ENCODE measurements at regions of chr17 and their contacts with region 1.

Region 1: GRCh38 chr17:72725433-72726068 is 366.9 kb downstream of the SLC39A11 start:
- DNase-seq: peak; percentile 66
- ATAC-seq: peak; percentile 84
- H3K4me3 ChIP-seq: no peak overlapping the region
- H3K27ac ChIP-seq: no peak overlapping the region
- H3K4me1 ChIP-seq: peaks cover 8% of the 10 kb centered on the region
- H3K27me3 ChIP-seq: no peaks in the 10 kb centered on the region
- CTCF ChIP-seq: peak; percentile 90
- POLR2A ChIP-seq: peak; percentile 42; the same call in 1 of the 2 replicates
- RAD21 ChIP-seq: peak; percentile 95

Region 2: DNA sequence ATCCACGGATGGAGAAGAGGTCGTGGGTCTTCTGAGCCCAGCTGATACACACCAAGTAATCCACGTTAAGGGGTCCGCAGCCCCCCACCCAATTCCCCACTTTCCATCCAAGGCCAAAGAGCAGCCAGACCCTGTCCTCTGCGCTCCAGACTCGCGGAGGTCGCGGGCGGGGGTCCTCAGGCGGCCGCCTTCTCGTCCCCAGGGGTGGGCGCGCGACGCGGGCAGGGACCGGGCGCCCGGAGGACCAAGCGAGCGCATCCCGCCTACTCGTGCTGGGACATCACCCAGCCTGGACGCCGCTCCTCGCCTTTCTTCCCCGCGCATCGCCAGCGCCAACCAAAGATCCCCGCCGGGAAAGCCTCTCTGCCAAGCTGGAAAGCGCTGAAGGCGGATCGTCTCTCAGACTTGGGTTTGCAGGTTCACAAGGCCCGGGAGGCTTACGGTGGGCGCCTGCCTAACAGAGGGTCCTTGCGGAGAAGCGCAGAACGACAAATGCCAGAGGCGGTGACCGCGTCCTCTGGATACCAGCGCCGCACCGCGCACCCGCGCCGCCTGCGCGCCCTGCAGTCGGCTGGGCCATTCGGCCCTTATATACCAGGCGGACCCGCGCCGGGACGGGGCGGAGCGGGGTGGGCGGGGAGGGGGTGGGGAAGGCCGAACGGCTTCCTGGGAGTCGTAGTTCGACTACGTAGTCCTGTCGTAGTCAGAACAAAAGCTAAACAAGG is 133.1 kb before region 1 on chr17:
- CTCF ChIA-PET with region 1: interaction called, 5 read pairs
- POLR2A ChIA-PET with region 1: no interaction called
- dilution Hi-C with region 1: no loop called
- in situ Hi-C with region 1: no loop called
- intact Hi-C with region 1: loop called (anchors 10 kb)
- DNase-seq: peak; percentile 84
- ATAC-seq: peak; percentile 89
- H3K4me3 ChIP-seq: peak overlapping the region; percentile 99
- H3K27ac ChIP-seq: peak overlapping the region; percentile 91
- H3K4me1 ChIP-seq: peaks cover 22% of the 10 kb centered on the region
- H3K27me3 ChIP-seq: no peaks in the 10 kb centered on the region
- CTCF ChIP-seq: no peak
- POLR2A ChIP-seq: peak; percentile 100
- RAD21 ChIP-seq: no peak; the same call in 1 of the 2 replicates

Region 3: GRCh38 chr17:73092523-73093135 is 367.1 kb after region 1 on chr17 and contains the start of gene SLC39A11:
- CTCF ChIA-PET with region 1: no interaction called
- POLR2A ChIA-PET with region 1: no interaction called
- dilution Hi-C with region 1: no loop called
- in situ Hi-C with region 1: no loop called
- intact Hi-C with region 1: loop called (anchors 5 kb)
- DNase-seq: peak; percentile 91
- ATAC-seq: peak; percentile 98
- H3K4me3 ChIP-seq: peak within 1 kb of the TSS; percentile 77
- H3K27ac ChIP-seq: peak within 1 kb of the TSS; percentile 63
- H3K4me1 ChIP-seq: peaks cover 3% of the 10 kb centered on the region
- H3K27me3 ChIP-seq: 0 out of 2 replicates have a peak, but pooled peaks cover 2% of the 10 kb centered on the region
- CTCF ChIP-seq: no peak
- POLR2A ChIP-seq: peak; percentile 56
- RAD21 ChIP-seq: no peak
- total RNA-seq, gene SLC39A11: 12.5 and 14.3 TPM in 2 replicates

Region 4: DNA sequence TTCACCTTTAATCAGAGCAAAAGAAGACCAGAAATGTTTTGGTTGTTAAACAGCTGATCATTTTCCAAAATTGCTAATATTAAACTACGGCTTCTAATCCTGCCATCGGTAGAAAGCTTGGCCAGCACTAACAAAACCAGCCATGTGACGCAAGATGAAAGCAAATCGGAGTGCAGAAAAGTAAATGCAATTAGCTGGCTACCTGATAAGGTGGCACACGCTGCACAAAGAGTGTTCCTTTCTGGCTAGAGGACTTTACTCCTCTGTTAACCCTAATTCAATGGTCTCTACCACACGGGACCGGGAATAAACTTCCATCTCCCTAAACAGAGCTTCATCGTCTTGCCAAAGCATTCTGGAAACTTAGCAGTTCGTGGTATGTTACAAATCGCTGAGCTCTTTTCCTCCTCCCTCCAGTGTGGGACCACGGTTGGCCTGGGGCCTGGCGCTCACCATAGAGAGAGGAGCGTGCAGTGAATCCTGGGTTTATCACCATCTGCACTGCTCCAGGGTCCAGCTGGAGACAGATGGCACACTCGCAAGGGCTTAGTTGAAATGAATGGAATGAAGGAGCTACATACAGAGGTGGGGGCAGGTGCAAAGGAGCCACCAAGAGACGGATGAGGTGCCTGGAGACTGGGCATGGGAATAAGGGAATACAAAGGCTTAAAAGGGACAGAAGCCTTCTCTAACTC is 457.2 kb after region 1 on chr17:
- CTCF ChIA-PET with region 1: interaction called, 10 read pairs
- POLR2A ChIA-PET with region 1: no interaction called
- dilution Hi-C with region 1: no loop called
- in situ Hi-C with region 1: loop called (anchors 5 kb)
- intact Hi-C with region 1: no loop called
- DNase-seq: no peak
- ATAC-seq: no peak
- H3K4me3 ChIP-seq: no peak overlapping the region
- H3K27ac ChIP-seq: no peak overlapping the region
- H3K4me1 ChIP-seq: peaks cover 2% of the 10 kb centered on the region; the same call in 1 of the 2 replicates
- H3K27me3 ChIP-seq: no peaks in the 10 kb centered on the region
- CTCF ChIP-seq: no peak
- POLR2A ChIP-seq: no peak
- RAD21 ChIP-seq: no peak

Region 5: GRCh38 chr17:73231841-73232586 is 506.5 kb after region 1 on chr17:
- CTCF ChIA-PET with region 1: interaction called, 3 read pairs
- POLR2A ChIA-PET with region 1: no interaction called
- dilution Hi-C with region 1: no loop called
- in situ Hi-C with region 1: no loop called
- intact Hi-C with region 1: loop called (anchors 5 kb)
- DNase-seq: peak; percentile 92
- ATAC-seq: peak; percentile 92
- H3K4me3 ChIP-seq: peak overlapping the region; percentile 82
- H3K27ac ChIP-seq: peak overlapping the region; percentile 77
- H3K4me1 ChIP-seq: peaks cover 12% of the 10 kb centered on the region
- H3K27me3 ChIP-seq: no peaks in the 10 kb centered on the region
- CTCF ChIP-seq: 0 out of 2 replicates have a peak, but pooled peaks have one; percentile 11
- POLR2A ChIP-seq: 0 out of 2 replicates have a peak, but pooled peaks have one; percentile 20
- RAD21 ChIP-seq: peak; percentile 17; the same call in 1 of the 2 replicates

Region 6: GRCh38 chr17:73371285-73371684 is 645.7 kb after region 1 on chr17:
- CTCF ChIA-PET with region 1: no interaction called
- POLR2A ChIA-PET with region 1: no interaction called
- dilution Hi-C with region 1: no loop called
- in situ Hi-C with region 1: loop called (anchors 5 kb)
- intact Hi-C with region 1: loop called (anchors 5 kb)
- DNase-seq: peak; percentile 92
- ATAC-seq: peak; percentile 64
- H3K4me3 ChIP-seq: no peak overlapping the region
- H3K27ac ChIP-seq: no peak overlapping the region
- H3K4me1 ChIP-seq: peaks cover 2% of the 10 kb centered on the region; the same call in 1 of the 2 replicates
- H3K27me3 ChIP-seq: peaks cover 20% of the 10 kb centered on the region
- CTCF ChIP-seq: no peak
- POLR2A ChIP-seq: no peak
- RAD21 ChIP-seq: no peak